ENCODE measurements at regions of chr7 and their contacts with region 1.

Region 1: GRCh38 chr7:115910541-115911164 is 119.9 kb downstream of the TFEC start:
- DNase-seq: no peak
- ATAC-seq: no peak
- H3K4me3 ChIP-seq: peak overlapping the region in 2 of 4 donors; percentile 11 to 19
- H3K27ac ChIP-seq: no peak overlapping the region
- H3K4me1 ChIP-seq: peaks cover 0 to 6% of the 10 kb centered on the region in 2 donors
- H3K27me3 ChIP-seq: no peaks in the 10 kb centered on the region
- CTCF ChIP-seq: peak in 3 of 5 experiments; percentile 19 to 38 (median 22)
- POLR2A ChIP-seq: no peak

Region 2: GRCh38 chr7:114026486-114027089 is 1884.1 kb before region 1 on chr7:
- in situ Hi-C with region 1: no loop called
- intact Hi-C with region 1: loop called (anchors 10 kb)
- DNase-seq: no peak
- ATAC-seq: no peak
- H3K4me3 ChIP-seq: no peak overlapping the region
- H3K27ac ChIP-seq: no peak overlapping the region
- H3K4me1 ChIP-seq: no peaks in the 10 kb centered on the region
- H3K27me3 ChIP-seq: no peaks in the 10 kb centered on the region
- CTCF ChIP-seq: peak; percentile 36 to 77 (median 66)
- POLR2A ChIP-seq: no peak